GM10248 (cell line): ENCODE measurements at regions of chr15 and their contacts with region 1.

Region 1: DNA sequence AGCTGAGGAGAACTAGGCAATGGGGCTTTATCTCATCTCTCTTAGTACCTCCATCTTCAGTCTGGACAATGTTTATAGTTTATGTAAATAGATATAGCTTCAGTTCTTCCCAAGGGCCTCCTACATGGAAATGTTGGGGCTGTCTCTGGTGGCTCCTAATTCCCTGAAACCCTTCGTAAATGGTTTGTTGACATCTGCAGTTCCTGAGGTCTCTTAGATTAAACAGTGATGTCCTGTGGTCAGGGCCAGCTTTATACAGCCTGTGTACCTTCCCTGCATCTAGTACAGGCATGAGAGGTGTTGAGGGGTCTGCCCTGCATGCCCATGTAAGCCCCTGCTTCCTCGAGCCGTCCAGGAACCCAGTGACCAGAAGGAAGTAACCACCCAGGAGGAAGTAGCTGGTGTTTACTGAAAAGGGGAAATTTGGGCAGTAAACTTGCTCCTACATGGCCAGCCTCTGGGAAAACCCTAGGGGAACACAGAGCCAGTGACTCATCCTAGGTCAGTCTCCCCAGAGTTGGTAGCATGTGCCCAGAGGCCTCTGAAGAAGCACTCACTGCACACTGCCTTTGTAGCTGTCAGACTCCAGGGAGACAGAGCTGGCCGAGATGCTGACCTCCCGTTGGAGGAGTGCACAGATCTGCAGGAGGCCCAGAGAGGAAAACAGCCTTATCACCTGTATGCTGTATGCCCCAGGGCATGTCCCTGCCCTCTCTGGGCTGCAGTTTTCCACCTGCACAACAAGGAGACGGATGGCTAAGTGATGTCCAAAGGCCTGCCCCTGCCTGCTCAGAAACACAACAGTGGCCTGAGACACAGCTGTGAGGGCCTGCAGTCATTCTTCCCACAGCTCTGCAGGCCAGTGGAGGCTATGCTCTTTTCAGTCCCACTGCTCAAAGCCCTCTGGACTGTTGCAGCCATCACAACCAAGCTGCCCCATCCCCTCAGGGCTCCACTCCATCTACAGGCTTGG is 4.9 kb upstream of the TBC1D2B start:
- DNase-seq: no peak
- CTCF ChIP-seq: no peak

Region 2: DNA sequence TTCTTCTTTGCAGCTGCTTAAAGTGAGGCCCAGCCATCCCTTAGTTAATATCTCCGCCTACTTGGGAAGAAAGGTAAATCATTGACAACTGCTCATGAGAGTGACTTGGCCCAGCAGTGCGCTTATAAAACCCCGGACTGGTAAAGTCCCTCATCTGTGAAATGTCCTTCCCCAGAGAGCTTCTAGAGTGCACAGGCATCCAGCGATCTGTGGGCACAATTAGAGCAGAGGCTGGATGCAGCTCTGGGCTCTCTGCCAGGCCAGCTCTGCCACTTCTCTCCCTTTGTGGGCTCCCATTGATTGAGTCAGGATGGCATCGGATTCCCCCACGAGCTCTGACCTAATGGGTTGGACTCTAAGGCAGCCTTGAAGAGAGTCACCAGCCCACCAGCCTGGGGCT is 230.7 kb before region 1 on chr15:
- CTCF ChIA-PET with region 1: no interaction called
- POLR2A ChIA-PET with region 1: no interaction called
- DNase-seq: no peak
- CTCF ChIP-seq: no peak

Region 3: DNA sequence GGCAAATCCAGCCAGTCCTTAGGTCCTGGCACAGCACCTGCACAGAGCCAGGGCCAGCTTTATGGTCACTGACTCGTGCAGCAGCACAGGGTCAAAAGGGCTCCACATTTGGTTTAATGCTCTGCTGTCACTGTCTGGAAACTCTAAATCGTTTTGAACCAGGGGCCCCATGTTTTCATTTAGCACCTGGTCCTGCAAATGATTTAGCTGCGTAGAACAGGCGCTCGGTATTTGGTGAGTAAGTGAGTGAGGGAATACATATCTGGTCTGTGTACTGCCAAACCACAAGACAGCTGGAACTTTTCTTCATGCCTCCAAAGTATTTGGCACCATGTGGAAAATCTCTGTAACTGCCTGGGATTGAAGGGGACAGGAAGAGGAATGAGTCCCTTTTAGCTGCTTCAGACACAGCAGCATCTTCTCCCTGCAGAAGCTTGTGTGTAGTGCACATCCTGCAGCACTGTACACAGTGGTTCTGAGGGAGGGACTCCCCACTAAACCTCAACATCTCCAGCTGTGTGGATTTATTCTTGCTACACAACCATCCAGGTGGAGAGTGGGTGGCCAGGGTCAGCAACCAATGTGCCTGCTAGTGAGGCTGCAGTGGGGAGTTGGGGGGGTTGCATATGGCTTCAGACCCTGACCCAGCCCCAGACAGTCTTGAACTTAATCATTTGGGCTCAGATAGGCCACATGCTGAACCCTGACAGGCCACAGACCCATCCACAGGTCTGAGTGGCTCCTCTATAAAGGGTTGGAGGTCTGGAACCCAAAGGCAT is 11.0 kb after region 1 on chr15:
- CTCF ChIA-PET with region 1: interaction called, 13 read pairs
- POLR2A ChIA-PET with region 1: no interaction called
- DNase-seq: no peak
- CTCF ChIP-seq: no peak

Region 4: DNA sequence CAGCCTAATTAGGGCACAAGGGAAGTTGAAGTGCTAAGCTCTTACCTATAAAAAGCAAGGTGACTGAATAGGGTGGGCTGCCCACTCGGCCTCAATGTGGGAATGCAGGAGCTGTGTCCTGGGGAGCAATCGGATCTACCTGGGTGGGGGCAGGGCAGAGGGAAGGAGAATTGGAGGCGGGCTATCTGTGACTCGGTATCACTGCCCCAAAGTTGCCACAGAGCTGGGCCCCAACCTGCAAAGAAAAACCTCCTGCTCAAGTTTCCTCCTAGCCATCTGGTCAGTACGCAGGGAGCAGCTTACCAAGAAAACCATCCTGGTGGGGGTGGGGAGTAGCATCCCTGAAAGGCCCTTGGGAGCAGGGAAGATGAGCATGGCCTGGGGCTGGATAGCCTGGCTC is 38.1 kb after region 1 on chr15:
- CTCF ChIA-PET with region 1: no interaction called
- POLR2A ChIA-PET with region 1: no interaction called
- DNase-seq: no peak
- CTCF ChIP-seq: no peak

Region 5: DNA sequence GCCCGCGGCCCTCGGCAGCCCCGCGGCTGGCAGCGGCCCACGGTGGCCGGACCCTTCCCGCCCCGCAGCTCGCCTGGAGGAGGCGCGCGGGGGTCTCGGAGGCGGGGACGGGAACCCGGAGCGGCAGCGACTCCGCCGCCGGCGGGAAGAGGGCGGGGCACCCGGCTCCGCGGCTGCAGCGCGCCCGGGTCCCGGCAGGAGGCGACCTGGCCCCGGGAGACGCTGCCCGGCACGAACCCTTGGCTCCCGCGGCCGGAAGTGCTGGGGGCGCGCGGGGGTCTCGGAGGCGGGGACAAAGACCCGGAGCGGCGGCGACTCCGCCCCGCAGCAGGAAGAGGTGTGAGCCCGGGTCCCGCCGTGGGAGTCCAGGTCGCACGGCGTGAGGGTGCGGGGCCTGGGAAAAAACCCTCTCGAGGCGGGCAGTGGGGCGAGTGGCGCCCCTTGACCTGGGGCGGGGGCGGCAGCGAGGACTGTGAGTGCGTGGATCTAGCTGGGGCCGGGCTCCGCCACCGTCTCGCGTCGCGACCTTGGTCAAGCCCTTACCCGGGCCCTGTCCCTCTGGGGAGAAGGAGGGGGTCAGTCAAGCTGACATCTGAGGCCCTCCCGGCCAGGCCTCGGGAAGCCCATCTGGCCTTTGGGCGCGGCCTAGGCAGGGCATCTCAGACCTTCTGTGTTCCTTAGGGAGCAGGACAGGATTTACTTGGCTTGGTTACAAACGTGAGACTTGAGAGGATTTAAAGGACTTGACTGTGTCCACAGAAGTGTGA is 49.1 kb after region 1 on chr15 and contains the start of gene CIB2:
- CTCF ChIA-PET with region 1: no interaction called
- POLR2A ChIA-PET with region 1: no interaction called
- DNase-seq: peak; percentile 94
- CTCF ChIP-seq: peak; percentile 84